ENCODE measurements at regions of chr13 and their contacts with region 1.

Region 1: GRCh38 chr13:35393886-35394285 is 82.6 kb downstream of the MAB21L1 start:
- DNase-seq: no peak
- ATAC-seq: no peak
- H3K4me3 ChIP-seq: no peak overlapping the region
- H3K27ac ChIP-seq: no peak overlapping the region
- H3K4me1 ChIP-seq: no peaks in the 10 kb centered on the region
- H3K27me3 ChIP-seq: no peaks in the 10 kb centered on the region
- CTCF ChIP-seq: no peak
- POLR2A ChIP-seq: no peak

Region 2: GRCh38 chr13:35512271-35512920 is 118.5 kb after region 1 on chr13:
- in situ Hi-C with region 1: no loop called
- intact Hi-C with region 1: loop called (anchors 10 kb)
- DNase-seq: peak in 1 of 2 donors; percentile 45
- ATAC-seq: peak; percentile 68 to 70
- H3K4me3 ChIP-seq: no peak overlapping the region
- H3K27ac ChIP-seq: no peak overlapping the region
- H3K4me1 ChIP-seq: no peaks in the 10 kb centered on the region
- H3K27me3 ChIP-seq: no peaks in the 10 kb centered on the region
- CTCF ChIP-seq: no peak
- POLR2A ChIP-seq: peak in 1 of 2 donors; percentile 8

Measured in gastrocnemius medialis (tissue), 4 donors.